ENCODE measurements at regions of chr20 and their contacts with region 1.

Region 1: DNA sequence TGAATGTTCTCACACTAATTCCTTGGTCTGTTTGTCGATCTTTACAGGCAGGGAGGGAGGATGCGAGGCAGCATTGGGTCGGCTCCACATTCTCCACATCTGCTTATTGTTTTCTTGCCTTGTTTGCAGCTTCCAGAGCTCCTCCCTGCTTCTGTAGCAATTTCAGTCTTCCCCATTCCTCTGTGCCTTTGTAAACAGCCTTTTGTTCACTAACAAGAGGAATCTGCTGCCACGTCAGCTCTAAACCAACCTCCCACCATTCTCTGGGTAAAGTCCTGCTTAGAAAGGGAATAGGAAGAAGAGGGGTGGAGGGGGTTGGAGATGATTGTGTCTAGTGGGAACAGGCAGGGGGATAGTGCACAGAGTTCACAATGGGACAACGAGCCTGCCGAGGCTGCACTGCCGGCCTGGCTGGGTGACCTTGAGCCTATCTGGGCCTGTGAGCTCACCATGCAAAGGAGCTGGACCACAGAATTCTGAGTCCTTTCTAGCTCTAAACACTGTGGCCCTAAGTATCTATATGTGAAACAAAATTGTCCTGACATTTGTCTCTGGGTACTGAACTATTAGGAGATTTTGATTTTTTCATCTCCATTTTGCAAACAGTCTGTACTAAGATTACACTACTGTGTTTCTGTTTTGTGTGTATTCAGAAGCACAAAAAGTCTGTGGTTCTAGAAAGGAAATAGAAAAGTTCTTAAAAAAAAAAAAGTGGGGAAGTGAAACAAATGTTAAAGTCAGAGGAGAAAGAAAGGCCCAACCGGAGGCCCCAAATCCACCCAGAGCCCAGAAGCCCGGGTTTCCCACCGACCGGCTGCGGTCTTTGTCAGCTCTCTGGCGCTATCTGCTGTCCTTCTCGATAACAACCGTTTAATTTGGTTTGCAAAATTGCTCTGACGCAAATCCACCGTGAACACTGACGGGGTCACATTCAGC is 1.4 kb upstream of the PRND start:
- DNase-seq: peak; percentile 46
- H3K4me3 ChIP-seq: no peak overlapping the region
- H3K27ac ChIP-seq: no peak overlapping the region
- H3K4me1 ChIP-seq: peaks cover 6% of the 10 kb centered on the region
- H3K27me3 ChIP-seq: no peaks in the 10 kb centered on the region
- CTCF ChIP-seq: peak; percentile 67 to 78

Region 2: DNA sequence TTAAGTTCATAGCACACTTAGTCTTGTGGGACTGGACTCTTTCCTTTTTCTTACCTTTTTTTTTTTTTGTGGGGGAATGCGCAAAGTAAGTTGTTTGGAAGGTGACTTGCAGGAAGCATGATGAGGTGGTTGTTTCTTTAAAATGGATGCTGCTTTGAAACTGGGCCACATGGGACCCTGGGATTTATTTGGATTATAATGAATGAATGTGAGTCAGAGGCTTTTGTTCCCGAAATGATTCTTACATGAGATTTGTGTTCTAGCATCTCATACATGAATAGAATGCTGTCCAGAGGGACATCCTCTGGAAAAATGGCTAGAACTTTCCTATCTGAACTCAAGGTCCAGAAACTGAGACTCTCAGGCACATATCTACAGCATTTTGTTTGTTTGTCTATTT is 468.3 kb before region 1 on chr20:
- CTCF ChIA-PET with region 1: no interaction called
- dilution Hi-C with region 1: no loop called
- in situ Hi-C with region 1: loop called in 1 of 2 experiments (anchors 10 kb)
- intact Hi-C with region 1: loop called (anchors 5 kb)
- DNase-seq: no peak
- H3K4me3 ChIP-seq: no peak overlapping the region
- H3K27ac ChIP-seq: no peak overlapping the region
- H3K4me1 ChIP-seq: peaks cover 3% of the 10 kb centered on the region
- H3K27me3 ChIP-seq: no peaks in the 10 kb centered on the region
- CTCF ChIP-seq: no peak

Region 3: DNA sequence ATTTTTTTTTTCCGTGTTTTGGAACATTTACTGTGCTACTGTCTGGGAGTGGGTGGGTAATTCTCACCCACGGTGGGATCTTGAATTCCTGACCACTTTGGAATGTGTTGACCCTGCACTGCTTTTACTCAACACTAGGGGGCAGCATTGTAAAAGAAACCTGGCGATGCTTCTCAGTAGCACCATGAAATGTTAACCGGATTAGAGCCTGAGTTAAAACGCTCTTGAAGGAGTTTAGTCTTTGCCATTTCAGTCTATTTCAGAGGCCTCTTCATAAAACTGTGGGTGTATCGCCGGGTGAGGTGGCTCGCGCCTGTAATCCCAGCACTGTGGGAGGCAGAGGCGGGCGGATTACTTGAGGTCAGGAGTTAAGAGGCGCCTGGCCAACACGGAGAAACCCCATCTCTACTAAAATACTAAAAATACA is 113.0 kb before region 1 on chr20:
- CTCF ChIA-PET with region 1: no interaction called
- dilution Hi-C with region 1: no loop called
- in situ Hi-C with region 1: loop called (anchors 5 kb)
- intact Hi-C with region 1: loop called (anchors 1 kb)
- DNase-seq: peak; percentile 40
- H3K4me3 ChIP-seq: no peak overlapping the region
- H3K27ac ChIP-seq: no peak overlapping the region
- H3K4me1 ChIP-seq: peaks cover 11% of the 10 kb centered on the region
- H3K27me3 ChIP-seq: no peaks in the 10 kb centered on the region
- CTCF ChIP-seq: peak; percentile 91 to 93

Region 4: DNA sequence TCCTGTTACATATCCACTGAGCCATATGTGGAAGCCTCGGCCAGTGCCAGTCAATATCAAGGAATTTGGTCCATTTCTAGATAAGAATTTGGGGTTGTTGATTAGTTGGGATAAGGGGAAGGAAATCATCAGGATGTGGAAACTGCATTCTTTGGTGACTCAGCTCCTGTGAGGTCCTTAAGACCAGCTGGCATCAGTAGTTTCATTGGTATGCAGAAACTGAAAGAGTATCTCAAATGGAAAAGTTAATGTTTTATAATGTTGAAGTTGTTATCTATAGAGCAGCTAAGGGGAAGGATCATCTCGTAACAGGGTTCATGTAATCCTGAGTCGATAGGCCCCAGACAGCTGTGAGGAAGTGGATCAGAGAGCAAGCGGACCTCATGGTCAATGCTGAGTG is 86.5 kb before region 1 on chr20:
- CTCF ChIA-PET with region 1: no interaction called
- dilution Hi-C with region 1: loop called (anchors 5 kb)
- in situ Hi-C with region 1: no loop called
- intact Hi-C with region 1: no loop called
- DNase-seq: peak; percentile 66
- H3K4me3 ChIP-seq: no peak overlapping the region
- H3K27ac ChIP-seq: peak overlapping the region; percentile 24
- H3K4me1 ChIP-seq: peaks cover 30% of the 10 kb centered on the region
- H3K27me3 ChIP-seq: no peaks in the 10 kb centered on the region
- CTCF ChIP-seq: no peak

Region 5: DNA sequence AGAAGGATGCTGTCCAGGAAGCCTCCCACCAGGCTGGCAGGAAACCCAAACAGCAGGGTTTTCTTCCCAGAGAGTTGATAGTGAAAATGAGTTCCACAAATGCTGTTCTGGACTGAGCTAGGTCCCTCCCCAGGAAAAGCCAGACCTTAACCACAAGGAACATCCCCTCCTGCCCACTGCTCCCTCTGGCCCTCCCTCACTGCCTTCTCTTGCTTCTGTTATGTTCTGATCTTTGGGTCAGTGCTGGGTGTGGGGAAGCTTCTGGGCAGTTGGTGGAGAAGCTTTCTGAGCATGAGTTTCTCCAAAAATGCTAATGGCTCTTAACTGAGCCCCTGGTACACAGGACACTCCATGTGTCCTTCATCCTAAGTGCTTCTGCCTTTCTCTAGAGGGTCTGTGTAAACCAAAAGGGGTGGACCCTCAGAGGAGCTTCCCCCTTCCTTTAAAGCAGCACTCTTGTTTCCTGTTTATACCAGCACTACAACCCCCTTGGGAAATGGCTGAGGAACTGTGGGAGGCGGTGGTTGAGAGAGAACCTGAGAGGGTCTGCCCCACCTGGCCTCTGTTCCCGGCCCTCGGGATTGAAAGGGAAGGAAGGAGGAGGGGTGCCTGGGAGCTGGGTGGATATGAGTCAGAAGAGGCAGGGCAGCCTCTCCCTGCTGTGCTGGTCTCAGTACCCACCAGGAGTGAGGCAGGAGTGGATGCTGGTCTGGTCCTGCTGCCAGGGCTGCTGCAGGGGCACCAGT is 448.5 kb after region 1 on chr20:
- CTCF ChIA-PET with region 1: interaction called, 10 read pairs
- dilution Hi-C with region 1: no loop called
- in situ Hi-C with region 1: no loop called
- intact Hi-C with region 1: no loop called
- DNase-seq: peak; percentile 45
- H3K4me3 ChIP-seq: no peak overlapping the region
- H3K27ac ChIP-seq: peak overlapping the region; percentile 9
- H3K4me1 ChIP-seq: peaks cover 14% of the 10 kb centered on the region
- H3K27me3 ChIP-seq: no peaks in the 10 kb centered on the region
- CTCF ChIP-seq: no peak